ENCODE measurements at regions of chr12 and their contacts with region 1.

Region 1: GRCh38 chr12:26651566-26652188 is 181.3 kb downstream of the ITPR2 start:
- DNase-seq: no peak
- H3K4me3 ChIP-seq: no peak overlapping the region
- CTCF ChIP-seq: peak; percentile 67

Region 2: DNA sequence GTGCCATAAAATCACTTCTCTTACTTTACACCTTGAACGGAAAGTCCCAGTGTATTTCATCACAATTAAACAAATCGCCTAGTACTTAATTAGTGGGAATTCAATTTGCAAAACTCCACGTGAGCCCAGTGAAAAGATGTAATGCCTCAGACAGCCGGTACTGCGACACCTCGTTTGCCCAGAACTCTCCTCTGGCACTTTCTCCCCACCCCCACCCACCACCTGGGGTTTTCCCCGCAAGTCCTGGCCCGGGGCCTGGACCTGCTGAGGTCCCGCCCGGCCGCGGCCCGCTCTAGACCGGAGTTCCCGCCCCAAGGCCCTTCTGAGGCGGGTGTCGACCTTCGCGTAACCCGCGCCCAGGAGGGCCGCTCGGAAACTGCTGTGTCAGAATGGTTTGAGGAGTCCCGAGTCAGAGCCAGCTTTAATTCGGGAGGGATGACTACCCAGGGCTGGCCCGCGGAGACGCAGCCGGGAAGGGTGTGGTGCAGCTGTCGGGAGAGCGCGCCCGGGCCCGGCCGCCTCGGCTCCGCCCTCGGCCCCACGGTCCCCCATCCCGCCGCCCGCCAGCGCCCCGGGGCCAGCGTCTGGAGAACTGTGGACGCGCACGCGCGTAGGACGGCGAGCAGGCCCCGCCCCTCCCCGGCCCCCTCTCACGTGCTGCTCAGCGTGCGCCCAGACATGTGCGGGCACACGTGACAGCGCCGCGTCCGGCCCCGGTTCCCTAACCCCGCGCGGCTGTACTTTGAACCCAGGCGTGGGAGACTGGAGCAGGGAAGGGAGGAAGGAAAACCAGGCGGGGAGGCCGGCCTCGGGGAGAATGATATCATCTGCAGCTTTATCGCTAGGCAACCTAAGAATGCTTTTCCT is 537.6 kb before region 1 on chr12:
- CTCF ChIA-PET with region 1: interaction called, 64 read pairs
- POLR2A ChIA-PET with region 1: interaction called, 6 read pairs
- DNase-seq: peak; percentile 24
- H3K4me3 ChIP-seq: peak overlapping the region; percentile 62
- CTCF ChIP-seq: peak; percentile 27

Region 3: DNA sequence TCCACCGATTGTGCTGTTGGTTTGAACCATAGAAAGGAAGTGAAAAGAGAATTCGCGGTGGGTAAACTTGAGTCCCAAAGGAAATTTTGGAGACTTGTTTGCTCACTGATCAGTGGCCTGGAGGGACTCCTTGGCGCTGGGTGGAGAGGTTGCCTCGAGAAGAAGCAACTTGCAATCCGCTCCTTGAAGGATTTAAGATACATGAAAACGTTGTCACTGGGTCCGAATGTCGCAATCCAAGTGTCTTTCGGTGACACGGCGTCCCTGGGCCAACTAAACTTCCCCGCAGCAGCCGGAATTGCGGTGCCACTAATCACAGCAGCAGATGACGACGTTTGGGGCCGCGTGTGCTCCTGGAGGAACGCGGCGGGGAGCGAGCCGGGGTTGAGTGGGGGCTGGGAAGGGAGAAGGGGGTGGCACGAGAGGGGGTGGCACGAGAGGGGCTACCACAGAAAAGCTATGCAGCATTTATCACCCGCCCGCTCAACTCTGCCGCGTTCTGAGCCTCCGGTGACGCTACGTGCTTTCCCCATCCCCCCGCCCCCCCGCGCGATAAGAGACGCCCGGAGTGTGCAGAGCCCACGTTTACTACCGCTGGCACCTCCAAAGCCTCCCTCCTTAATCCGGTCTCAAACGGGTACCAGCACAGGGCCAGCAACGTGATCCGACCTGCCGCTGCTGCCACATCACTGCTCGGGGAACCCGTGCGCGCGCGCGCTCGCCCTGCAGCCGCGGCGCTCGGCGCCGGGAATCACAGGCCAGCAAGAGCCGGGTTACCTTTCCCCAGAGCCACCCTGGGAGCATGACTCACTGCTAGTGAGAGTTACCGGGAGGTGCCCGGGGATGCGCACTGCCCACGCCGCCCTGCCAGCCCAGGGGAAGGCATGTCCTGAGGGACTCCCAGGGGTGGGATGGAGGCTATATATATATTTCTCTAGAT is 526.0 kb before region 1 on chr12:
- CTCF ChIA-PET with region 1: interaction called, 64 read pairs
- POLR2A ChIA-PET with region 1: no interaction called
- DNase-seq: peak; percentile 24
- H3K4me3 ChIP-seq: peak overlapping the region; percentile 69
- CTCF ChIP-seq: no peak

Region 4: GRCh38 chr12:26499979-26500640 is 151.6 kb before region 1 on chr12:
- CTCF ChIA-PET with region 1: no interaction called
- POLR2A ChIA-PET with region 1: no interaction called
- DNase-seq: no peak
- H3K4me3 ChIP-seq: no peak overlapping the region
- CTCF ChIP-seq: no peak

Region 5: DNA sequence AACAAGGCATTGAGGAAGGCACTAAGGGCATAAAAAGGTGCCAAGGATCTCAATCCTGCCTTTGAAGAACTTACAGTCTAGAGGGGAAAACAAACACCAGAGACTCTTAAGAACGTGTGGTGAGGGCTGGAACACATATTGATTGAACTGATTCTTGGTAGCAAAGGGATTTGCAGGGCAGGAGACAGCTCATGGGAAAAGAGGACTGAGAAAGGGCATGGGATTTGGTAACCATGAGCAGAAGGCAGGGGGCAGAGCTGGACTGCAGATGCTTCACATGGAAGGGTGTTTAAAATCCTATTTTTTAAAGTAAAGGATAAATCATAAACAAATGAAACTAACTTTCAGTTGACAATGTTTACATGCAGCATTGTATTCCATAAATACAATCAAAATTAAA is 21.8 kb before region 1 on chr12:
- CTCF ChIA-PET with region 1: interaction called, 54 read pairs
- POLR2A ChIA-PET with region 1: no interaction called
- DNase-seq: no peak
- H3K4me3 ChIP-seq: peak overlapping the region; percentile 4
- CTCF ChIP-seq: peak; percentile 39

Region 6: DNA sequence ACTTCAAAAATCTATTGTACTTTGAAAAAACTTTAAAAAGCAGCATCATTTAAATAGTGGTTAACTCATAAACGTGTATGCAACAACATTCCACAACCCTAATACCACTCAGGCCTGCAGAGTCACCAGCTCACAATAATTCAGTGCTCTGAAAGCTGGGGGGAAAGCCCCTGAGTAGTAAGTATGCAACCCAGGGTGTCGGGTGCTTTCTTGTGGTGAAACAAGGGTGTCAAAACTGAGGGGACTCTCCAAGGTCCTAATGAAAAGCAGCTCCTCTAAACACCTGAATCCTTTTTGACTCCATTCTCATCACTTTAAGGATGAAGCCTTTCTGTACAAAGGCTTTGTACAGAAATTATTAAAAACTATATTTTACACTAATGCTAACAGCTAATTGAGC is 320.3 kb after region 1 on chr12:
- CTCF ChIA-PET with region 1: no interaction called
- POLR2A ChIA-PET with region 1: no interaction called
- DNase-seq: no peak
- H3K4me3 ChIP-seq: no peak overlapping the region
- CTCF ChIP-seq: no peak

Measured in AG04449 (cell line).